Activated CD4-positive, alpha-beta T cell treated with anti-CD3 and anti-CD28 coated beads for 36 hours (primary cell): ENCODE measurements at regions of chr2 and their contacts with region 1.

Region 1: GRCh38 chr2:227817850-227818674 is 4.4 kb downstream of the CCL20 start:
- DNase-seq: peak; percentile 93
- ATAC-seq: peak; percentile 81
- H3K4me3 Mint-ChIP-seq: peak overlapping the region; percentile 6
- H3K27ac Mint-ChIP-seq: peak overlapping the region; percentile 70
- H3K4me1 Mint-ChIP-seq: peaks cover 32% of the 10 kb centered on the region
- H3K27me3 Mint-ChIP-seq: peaks cover 23% of the 10 kb centered on the region

Region 2: GRCh38 chr2:227374158-227374557 is 443.9 kb before region 1 on chr2:
- CTCF ChIA-PET with region 1: no interaction called
- POLR2A ChIA-PET with region 1: interaction called, 3 read pairs
- intact Hi-C with region 1: loop called in 1 of 2 experiments (anchors 1 kb)
- DNase-seq: peak; percentile 76
- ATAC-seq: peak; percentile 89
- H3K4me3 Mint-ChIP-seq: no peak overlapping the region
- H3K27ac Mint-ChIP-seq: peak overlapping the region; percentile 59
- H3K4me1 Mint-ChIP-seq: peaks cover 26% of the 10 kb centered on the region
- H3K27me3 Mint-ChIP-seq: peaks cover 2% of the 10 kb centered on the region

Region 3: GRCh38 chr2:227460070-227460485 is 358.0 kb before region 1 on chr2:
- CTCF ChIA-PET with region 1: no interaction called
- POLR2A ChIA-PET with region 1: no interaction called
- intact Hi-C with region 1: loop called (anchors 1 to 5 kb)
- DNase-seq: peak; percentile 86
- ATAC-seq: peak; percentile 37
- H3K4me3 Mint-ChIP-seq: peak overlapping the region; percentile 60
- H3K27ac Mint-ChIP-seq: peak overlapping the region; percentile 85
- H3K4me1 Mint-ChIP-seq: peaks cover 86% of the 10 kb centered on the region
- H3K27me3 Mint-ChIP-seq: no peaks in the 10 kb centered on the region

Region 4: GRCh38 chr2:227783404-227784138 is 34.5 kb before region 1 on chr2:
- CTCF ChIA-PET with region 1: interaction called, 3 read pairs
- POLR2A ChIA-PET with region 1: no interaction called
- intact Hi-C with region 1: loop called (anchors 1 to 2 kb)
- DNase-seq: peak; percentile 21
- ATAC-seq: peak; percentile 87
- H3K4me3 Mint-ChIP-seq: peak overlapping the region; percentile 65
- H3K27ac Mint-ChIP-seq: peak overlapping the region; percentile 68
- H3K4me1 Mint-ChIP-seq: peaks cover 18% of the 10 kb centered on the region
- H3K27me3 Mint-ChIP-seq: peaks cover 17% of the 10 kb centered on the region

Region 5: DNA sequence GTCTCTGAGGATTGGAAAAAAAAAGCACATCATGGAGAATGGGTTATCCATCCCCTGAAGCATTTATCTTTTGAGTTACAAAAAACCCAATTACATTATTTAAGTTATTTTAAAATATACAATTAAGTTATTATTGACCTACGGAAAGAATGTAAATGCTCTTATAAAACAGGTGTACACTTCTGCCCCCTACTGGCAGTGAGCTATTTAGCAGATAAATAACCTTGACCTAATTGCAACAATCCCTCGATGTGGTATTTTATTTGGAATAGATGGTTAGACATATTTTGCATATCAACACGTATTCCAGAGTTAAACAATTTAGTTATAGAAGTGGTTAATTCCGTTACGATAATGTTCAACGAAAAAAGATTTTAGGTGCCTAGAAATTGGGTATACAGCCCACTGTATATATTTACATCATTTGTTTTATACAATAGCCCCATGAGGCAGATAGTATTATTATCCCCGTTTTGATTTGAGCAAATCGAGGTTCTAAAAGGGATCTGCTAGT is 44.2 kb after region 1 on chr2:
- CTCF ChIA-PET with region 1: interaction called, 4 read pairs
- POLR2A ChIA-PET with region 1: no interaction called
- intact Hi-C with region 1: loop called (anchors 5 kb)
- DNase-seq: peak; percentile 49
- ATAC-seq: no peak
- H3K4me3 Mint-ChIP-seq: no peak overlapping the region
- H3K27ac Mint-ChIP-seq: no peak overlapping the region
- H3K4me1 Mint-ChIP-seq: peaks cover 3% of the 10 kb centered on the region
- H3K27me3 Mint-ChIP-seq: peaks cover 8% of the 10 kb centered on the region

Region 6: DNA sequence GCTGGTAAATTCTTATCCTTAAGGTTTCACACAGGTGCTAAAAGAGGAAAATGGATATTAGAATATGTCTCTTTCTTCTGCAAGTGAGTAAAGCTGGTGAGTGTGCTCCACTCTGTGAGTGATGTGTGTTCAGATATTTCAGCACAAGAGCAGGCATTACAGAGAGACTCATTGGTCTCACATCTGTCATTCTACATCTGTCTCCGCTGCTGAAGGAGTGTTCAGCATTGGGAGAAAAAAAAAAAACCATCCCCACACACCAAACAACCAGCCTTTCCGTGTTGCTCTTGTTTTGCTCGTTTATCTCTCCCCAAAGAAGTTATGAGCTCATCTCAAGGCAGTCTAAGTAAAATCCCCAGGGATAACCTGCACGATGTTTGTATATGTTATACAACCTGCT is 647.3 kb after region 1 on chr2:
- CTCF ChIA-PET with region 1: no interaction called
- POLR2A ChIA-PET with region 1: no interaction called
- intact Hi-C with region 1: no loop called
- DNase-seq: no peak
- ATAC-seq: no peak
- H3K4me3 Mint-ChIP-seq: no peak overlapping the region
- H3K27ac Mint-ChIP-seq: no peak overlapping the region
- H3K4me1 Mint-ChIP-seq: no peaks in the 10 kb centered on the region
- H3K27me3 Mint-ChIP-seq: no peaks in the 10 kb centered on the region

Region 7: DNA sequence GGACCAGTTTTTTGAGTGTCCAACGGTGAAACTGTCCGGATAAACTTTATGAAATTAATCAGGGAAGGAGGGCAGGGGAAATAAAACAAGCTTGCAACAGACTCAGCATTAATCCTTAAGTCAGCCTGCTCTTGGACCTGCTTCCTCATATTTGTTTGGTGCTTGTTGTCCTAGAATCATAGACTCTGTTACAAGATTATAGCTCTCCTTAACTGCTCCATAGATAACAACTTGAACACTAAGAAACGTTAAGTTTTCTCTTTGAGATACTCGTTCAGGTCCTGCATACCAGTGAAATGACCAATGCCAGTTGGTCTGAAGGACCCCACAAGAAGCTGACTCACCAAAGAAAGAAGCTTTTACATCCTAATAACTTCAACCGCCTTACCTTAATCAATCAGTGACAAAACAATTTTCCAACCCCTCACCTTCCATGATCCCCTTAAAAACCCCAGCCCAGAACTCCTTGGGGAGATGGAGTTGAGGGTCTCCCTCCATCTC is 959.8 kb after region 1 on chr2:
- CTCF ChIA-PET with region 1: no interaction called
- POLR2A ChIA-PET with region 1: no interaction called
- intact Hi-C with region 1: no loop called
- DNase-seq: no peak
- ATAC-seq: no peak
- H3K4me3 Mint-ChIP-seq: no peak overlapping the region
- H3K27ac Mint-ChIP-seq: no peak overlapping the region
- H3K4me1 Mint-ChIP-seq: no peaks in the 10 kb centered on the region
- H3K27me3 Mint-ChIP-seq: no peaks in the 10 kb centered on the region

Region 8: DNA sequence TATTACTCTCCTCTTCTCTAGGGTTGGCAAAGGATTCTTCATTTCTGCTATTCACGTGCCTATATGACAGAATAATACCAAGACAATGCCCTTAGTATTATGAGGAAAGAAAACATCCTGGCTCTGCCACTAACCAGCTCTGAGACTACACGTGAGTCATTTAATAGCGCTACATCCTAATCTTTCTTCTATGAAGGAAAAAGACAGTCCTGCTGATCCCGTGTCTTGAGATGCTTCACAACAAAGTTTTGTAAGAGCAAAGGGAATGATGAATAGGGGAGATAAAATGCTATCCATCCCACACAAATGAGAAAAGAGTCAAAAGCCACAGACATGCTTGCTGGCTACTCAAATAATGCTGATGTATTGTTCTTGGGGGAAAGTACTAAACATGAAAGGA is 1300.3 kb after region 1 on chr2:
- CTCF ChIA-PET with region 1: no interaction called
- POLR2A ChIA-PET with region 1: no interaction called
- intact Hi-C with region 1: no loop called
- DNase-seq: no peak
- ATAC-seq: no peak
- H3K4me3 Mint-ChIP-seq: no peak overlapping the region
- H3K27ac Mint-ChIP-seq: no peak overlapping the region
- H3K4me1 Mint-ChIP-seq: no peaks in the 10 kb centered on the region
- H3K27me3 Mint-ChIP-seq: no peaks in the 10 kb centered on the region